CD4-positive, alpha-beta memory T cell (primary cell): ENCODE measurements at regions of chr5 and their contacts with region 1.

Region 1: DNA sequence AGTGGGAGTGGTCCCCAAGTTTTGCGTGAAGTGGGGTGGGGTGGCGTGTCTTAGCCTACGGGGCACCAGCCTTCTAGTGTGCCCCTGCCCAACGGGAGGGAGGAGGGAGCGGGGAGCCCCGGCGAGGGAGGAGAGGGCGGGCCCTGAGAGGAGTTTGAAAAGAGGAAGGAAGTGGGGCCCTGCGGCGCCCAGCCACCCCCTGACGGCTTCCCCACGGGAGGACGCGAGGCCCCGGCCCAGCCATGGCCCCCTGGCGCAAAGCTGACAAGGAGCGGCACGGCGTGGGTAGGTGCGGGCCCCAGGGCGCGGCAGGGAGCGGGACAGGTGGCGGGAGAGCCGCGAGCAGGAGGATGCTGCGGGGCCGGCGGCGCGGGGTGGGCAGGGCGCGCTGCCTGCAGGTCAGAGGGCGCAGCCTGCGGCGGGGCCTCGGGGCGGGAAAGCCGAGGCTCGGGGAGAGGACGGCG is at the start of gene DOCK2:
- DNase-seq: peak; percentile 61 to 82 (median 66)
- H3K4me3 ChIP-seq: peak within 1 kb of the TSS; percentile 71 to 80
- H3K4me3 Mint-ChIP-seq: peak within 1 kb of the TSS; percentile 91 to 96 (median 94)
- H3K27ac ChIP-seq: peak within 1 kb of the TSS; percentile 82
- H3K27ac Mint-ChIP-seq: peak within 1 kb of the TSS; percentile 93 to 97 (median 94)
- H3K4me1 ChIP-seq: peaks cover 50% of the 10 kb centered on the region
- H3K4me1 Mint-ChIP-seq: peaks cover 37 to 55% (median 45%) of the 10 kb centered on the region in 4 donors
- H3K27me3 ChIP-seq: no peaks in the 10 kb centered on the region
- H3K27me3 Mint-ChIP-seq: no peaks in the 10 kb centered on the region
- total RNA-seq, gene DOCK2: 222 to 223 TPM

Region 2: GRCh38 chr5:169416583-169417196 is 220.4 kb before region 1 on chr5:
- CTCF ChIA-PET with region 1: no interaction called
- POLR2A ChIA-PET with region 1: no interaction called
- intact Hi-C with region 1: no loop called
- DNase-seq: no peak
- H3K4me3 ChIP-seq: no peak overlapping the region
- H3K4me3 Mint-ChIP-seq: no peak overlapping the region
- H3K27ac ChIP-seq: no peak overlapping the region
- H3K27ac Mint-ChIP-seq: no peak overlapping the region
- H3K4me1 ChIP-seq: no peaks in the 10 kb centered on the region
- H3K4me1 Mint-ChIP-seq: no peaks in the 10 kb centered on the region
- H3K27me3 ChIP-seq: no peaks in the 10 kb centered on the region
- H3K27me3 Mint-ChIP-seq: peaks cover 8 to 9% of the 10 kb centered on the region in 2 donors

Region 3: DNA sequence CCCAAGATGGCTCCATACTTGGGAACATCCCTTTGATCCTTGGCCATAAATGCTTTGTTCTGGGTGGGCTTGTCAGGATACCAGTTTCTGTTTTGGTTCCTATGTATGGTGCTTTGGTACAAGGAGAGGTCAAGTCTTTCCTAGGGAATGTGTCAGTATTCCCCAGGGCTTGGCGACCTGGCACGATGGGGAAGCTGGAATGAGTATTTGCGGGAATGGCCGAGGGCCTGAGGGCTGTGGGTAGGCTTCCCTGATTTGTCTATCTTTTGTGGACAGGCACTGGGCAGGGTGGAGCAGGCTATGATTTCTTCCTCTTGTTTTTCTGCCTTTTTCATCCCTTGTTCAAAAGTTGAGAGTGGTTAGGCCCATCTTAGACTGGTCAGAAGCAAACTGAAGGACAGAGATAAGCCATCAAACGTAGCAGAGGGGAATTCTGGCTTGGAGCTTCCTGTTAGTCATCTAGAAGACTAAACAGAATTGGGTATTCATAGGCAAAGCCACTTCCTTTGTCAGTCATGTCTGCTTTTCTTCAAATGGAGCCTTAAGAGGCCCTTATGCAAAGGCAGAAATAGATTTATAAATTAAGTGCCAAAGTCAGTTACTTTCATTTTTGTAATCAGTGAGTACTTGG is 13.7 kb after region 1 on chr5:
- CTCF ChIA-PET with region 1: interaction called, 4 read pairs
- POLR2A ChIA-PET with region 1: interaction called, 21 read pairs
- intact Hi-C with region 1: loop called (anchors 1 kb)
- DNase-seq: peak in 3 of 5 donors; percentile 13 to 70 (median 28)
- H3K4me3 ChIP-seq: peak overlapping the region in 1 of 2 donors; percentile 2
- H3K4me3 Mint-ChIP-seq: peak overlapping the region; percentile 55 to 85 (median 74)
- H3K27ac ChIP-seq: peak overlapping the region; percentile 54
- H3K27ac Mint-ChIP-seq: peak overlapping the region; percentile 89 to 98 (median 93)
- H3K4me1 ChIP-seq: peaks cover 99% of the 10 kb centered on the region
- H3K4me1 Mint-ChIP-seq: peaks cover 89 to 100% (median 96%) of the 10 kb centered on the region in 4 donors
- H3K27me3 ChIP-seq: no peaks in the 10 kb centered on the region
- H3K27me3 Mint-ChIP-seq: no peaks in the 10 kb centered on the region

Region 4: DNA sequence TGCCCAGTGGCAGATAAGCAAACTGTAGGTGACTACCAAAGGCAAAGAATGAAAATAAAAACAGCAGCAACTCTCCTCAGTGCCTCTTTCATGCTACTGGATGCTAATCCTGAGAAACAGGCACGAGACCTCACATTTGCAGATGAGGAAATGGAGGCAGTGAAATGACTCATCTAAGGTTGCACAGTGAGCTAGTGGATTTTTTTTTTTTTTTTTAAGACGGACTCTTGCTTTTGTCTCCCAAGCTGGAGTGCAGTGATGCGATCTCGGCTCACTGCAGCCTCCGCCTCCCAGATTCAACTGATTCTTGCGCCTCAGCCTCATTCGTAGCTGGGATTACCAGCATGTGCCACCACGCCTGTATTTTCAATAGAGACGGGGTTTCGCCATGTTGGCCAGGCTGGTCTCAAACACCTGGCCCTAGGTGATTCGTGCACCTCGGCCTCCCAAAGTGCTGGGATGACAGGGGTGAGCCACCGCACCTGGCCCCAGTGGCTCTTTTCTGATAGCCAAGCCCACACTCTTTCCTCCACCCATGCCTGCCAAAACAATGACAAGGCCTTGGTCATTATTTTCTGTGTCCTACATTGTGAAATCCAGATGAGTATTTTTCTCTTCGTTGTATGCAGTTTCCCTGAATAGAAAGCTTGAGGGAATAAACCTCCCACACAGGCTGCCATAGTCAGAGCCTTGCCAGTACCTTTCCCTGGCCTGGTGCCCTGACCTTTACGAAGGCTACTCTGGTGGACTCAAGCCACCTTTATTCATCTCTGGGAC is 19.2 kb after region 1 on chr5:
- CTCF ChIA-PET with region 1: no interaction called
- POLR2A ChIA-PET with region 1: interaction called, 21 read pairs
- intact Hi-C with region 1: loop called (anchors 2 kb)
- DNase-seq: no peak
- H3K4me3 ChIP-seq: no peak overlapping the region
- H3K4me3 Mint-ChIP-seq: peak overlapping the region in 6 of 8 donors; percentile 22 to 81 (median 66)
- H3K27ac ChIP-seq: peak overlapping the region; percentile 24
- H3K27ac Mint-ChIP-seq: peak overlapping the region; percentile 53 to 93 (median 84)
- H3K4me1 ChIP-seq: peaks cover 73% of the 10 kb centered on the region
- H3K4me1 Mint-ChIP-seq: peaks cover 62 to 87% (median 70%) of the 10 kb centered on the region in 4 donors
- H3K27me3 ChIP-seq: no peaks in the 10 kb centered on the region
- H3K27me3 Mint-ChIP-seq: no peaks in the 10 kb centered on the region